ENCODE measurements at regions of chr14 and their contacts with region 1.

Region 1: DNA sequence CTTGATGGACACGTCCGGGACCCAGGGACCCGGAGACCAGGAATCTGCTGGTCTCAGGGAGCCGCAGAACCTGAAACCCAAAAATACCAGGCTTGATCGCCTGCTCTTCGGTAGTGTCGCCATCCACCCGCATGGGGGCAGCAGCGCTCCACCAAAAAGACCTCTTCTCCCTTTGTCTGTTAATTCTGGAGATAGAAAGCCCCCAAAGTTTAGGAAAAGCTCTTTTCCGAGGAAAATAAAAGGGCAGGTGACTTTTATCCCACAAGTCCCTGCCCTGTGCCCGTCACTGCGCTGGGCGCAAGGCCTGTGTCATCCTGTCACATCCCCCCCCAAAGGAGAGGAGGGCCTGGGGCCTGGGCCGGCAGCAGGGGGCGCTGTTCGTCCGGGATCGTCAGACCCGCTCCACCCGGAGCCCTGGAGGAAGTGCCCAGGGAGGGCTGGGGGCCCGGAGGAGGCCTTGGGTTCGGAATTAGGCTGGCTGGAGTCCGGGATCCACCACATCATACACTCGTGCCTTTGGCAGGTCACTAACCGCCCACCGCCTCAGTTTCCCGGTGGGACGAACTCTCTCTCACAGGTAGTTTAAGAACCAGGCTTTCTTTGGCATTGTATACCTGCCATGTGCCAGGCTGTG is 31.9 kb downstream of the DAD1 start:
- DNase-seq: peak; percentile 87
- H3K4me3 Mint-ChIP-seq: peak overlapping the region; percentile 81
- H3K27ac Mint-ChIP-seq: peak overlapping the region; percentile 98
- H3K4me1 Mint-ChIP-seq: peaks cover 88% of the 10 kb centered on the region
- H3K27me3 Mint-ChIP-seq: peaks cover 3% of the 10 kb centered on the region

Region 2: GRCh38 chr14:21734457-21735074 is 822.5 kb before region 1 on chr14:
- intact Hi-C with region 1: loop called (anchors 10 kb)
- DNase-seq: no peak
- H3K4me3 Mint-ChIP-seq: peak overlapping the region; percentile 23
- H3K27ac Mint-ChIP-seq: no peak overlapping the region
- H3K4me1 Mint-ChIP-seq: peaks cover 4% of the 10 kb centered on the region
- H3K27me3 Mint-ChIP-seq: peaks cover 28% of the 10 kb centered on the region

Region 3: GRCh38 chr14:21987937-21988336 is 569.2 kb before region 1 on chr14:
- intact Hi-C with region 1: loop called (anchors 5 kb)
- DNase-seq: no peak
- H3K4me3 Mint-ChIP-seq: peak overlapping the region; percentile 13
- H3K27ac Mint-ChIP-seq: peak overlapping the region; percentile 75
- H3K4me1 Mint-ChIP-seq: peaks cover 28% of the 10 kb centered on the region
- H3K27me3 Mint-ChIP-seq: peaks cover 2% of the 10 kb centered on the region

Region 4: GRCh38 chr14:22200977-22201605 is 356.0 kb before region 1 on chr14:
- intact Hi-C with region 1: loop called (anchors 5 kb)
- DNase-seq: no peak
- H3K4me3 Mint-ChIP-seq: no peak overlapping the region
- H3K27ac Mint-ChIP-seq: no peak overlapping the region
- H3K4me1 Mint-ChIP-seq: peaks cover 10% of the 10 kb centered on the region
- H3K27me3 Mint-ChIP-seq: no peaks in the 10 kb centered on the region

Region 5: DNA sequence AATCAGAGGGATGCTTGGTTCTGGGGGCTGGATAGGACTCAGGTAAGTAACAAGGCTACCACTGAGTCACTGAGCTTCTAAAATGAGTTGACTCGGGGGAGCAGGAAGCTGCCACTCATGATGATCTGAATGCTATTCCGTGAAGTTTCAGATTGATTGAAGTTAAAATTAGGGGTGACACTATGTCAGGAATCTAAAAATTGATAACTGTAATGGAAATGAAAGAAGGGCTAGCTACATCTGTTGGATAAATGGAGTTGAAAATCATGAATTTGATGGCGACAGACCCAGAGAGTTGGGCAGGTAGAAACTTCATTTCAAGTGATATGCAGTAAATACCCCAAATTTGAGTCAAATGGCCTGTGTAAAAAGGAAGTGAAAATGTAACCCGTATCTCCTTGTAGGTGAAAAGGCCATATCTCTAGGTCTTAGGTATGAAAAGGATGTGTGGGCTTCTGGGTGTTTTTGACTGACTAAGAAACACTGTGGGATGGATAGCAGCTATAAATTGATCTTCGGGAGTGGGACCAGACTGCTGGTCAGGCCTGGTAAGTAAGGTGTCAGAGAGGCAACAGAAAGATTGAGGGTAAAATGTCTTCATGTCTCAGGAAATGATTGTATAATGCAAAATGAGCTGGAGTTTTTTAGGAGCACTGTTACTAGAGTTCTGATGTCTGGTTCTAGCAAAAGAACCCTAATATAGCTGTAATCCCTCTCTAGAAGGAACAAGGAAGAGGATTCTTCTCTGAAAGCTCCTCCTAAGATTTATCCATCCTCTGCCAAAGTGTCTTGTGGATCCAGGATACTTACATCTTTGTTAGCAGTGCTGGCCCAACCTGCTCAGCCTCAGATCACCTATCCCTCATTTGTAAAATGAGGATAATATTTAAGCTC is 25.4 kb before region 1 on chr14:
- intact Hi-C with region 1: loop called (anchors 1 kb)
- DNase-seq: no peak
- H3K4me3 Mint-ChIP-seq: peak overlapping the region; percentile 76
- H3K27ac Mint-ChIP-seq: peak overlapping the region; percentile 88
- H3K4me1 Mint-ChIP-seq: peaks cover 87% of the 10 kb centered on the region
- H3K27me3 Mint-ChIP-seq: no peaks in the 10 kb centered on the region

Region 6: DNA sequence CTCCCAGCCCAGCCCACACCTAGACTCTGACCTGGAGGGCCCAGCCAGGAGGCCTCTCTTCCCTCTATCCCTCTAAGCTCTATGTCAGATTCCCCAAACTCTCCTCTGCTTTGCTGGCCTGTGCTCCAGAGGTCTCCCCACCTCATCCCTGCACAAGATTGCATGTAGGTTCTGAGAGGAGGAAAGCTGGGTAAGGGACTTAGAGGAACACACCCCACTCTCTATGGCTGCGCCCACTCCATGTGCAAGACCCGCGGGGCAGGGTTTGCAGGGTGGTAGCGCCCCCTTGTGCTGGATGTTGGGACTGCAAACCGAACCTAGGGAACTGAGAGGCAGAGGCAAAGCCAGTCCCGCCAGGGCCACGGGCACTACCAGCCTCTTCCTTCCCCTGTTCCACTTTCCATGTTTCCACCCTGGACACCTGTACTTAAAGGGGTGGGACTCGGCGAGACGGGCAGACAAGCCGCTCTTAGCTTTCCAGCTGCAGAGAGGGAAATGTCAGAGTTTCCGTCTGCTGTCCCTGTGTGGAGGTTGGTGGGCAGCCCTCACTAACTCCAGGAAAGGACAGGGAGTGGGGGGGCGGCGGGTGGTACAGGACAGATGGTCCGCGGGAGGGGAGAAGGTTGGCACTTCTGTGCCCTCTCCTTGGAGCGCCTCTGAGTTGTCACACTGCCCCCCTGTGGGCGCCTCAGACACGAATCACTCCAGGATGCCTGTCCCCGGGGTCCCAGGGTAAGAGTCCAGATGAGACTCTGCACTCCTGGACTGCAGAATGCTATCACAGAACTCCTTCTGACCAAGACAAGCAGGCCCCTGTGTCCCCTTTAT is 296.0 kb after region 1 on chr14:
- intact Hi-C with region 1: loop called (anchors 1 kb)
- DNase-seq: peak; percentile 80
- H3K4me3 Mint-ChIP-seq: peak overlapping the region; percentile 79
- H3K27ac Mint-ChIP-seq: peak overlapping the region; percentile 40
- H3K4me1 Mint-ChIP-seq: peaks cover 24% of the 10 kb centered on the region
- H3K27me3 Mint-ChIP-seq: peaks cover 9% of the 10 kb centered on the region

Measured in activated T-helper 2 cell treated with anti-CD3 and anti-CD28 coated beads, Interferon-gamma antibody, Interleukin-2, Interleukin-4, amounts not matched to agents 10 μg/mL and 5 μg/mL and 100 μg/mL, durations not matched to agents 14 hours and 24 hours and 36 hours (primary cell).